ENCODE measurements at regions of chr16 and their contacts with region 1.

Region 1: DNA sequence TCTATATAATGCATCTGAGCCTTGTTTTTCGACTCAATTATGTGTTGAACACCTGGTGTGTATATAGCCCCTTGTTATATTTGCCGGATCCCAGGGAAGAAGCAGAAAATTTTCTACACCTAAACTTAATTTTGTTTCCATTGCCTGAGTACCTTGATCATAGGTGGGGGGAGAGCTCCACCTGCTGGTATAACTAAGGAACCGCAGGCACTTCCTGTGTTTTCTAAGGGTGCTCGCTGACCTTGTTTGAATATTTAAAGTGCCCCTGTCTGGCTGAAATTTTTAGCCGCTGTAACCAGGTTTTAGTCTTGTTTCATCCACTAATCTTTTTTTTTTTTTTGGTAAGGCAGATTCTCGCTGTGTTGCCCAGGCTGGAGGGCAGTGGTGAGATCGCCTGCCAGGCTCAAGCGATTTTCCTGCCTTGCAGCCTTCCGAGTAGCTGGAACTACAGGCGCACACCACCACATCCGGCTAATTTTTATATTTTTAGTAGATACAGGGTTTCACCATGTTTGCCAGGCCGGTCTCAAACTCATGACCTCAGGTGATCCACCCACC is 6.5 kb upstream of the NUBP1 start:
- DNase-seq: peak; percentile 59
- ATAC-seq: peak; percentile 64
- H3K4me3 Mint-ChIP-seq: no peak overlapping the region
- H3K27ac Mint-ChIP-seq: no peak overlapping the region
- H3K4me1 Mint-ChIP-seq: no peaks in the 10 kb centered on the region
- H3K27me3 Mint-ChIP-seq: no peaks in the 10 kb centered on the region
- CTCF ChIP-seq: peak; percentile 96

Region 2: DNA sequence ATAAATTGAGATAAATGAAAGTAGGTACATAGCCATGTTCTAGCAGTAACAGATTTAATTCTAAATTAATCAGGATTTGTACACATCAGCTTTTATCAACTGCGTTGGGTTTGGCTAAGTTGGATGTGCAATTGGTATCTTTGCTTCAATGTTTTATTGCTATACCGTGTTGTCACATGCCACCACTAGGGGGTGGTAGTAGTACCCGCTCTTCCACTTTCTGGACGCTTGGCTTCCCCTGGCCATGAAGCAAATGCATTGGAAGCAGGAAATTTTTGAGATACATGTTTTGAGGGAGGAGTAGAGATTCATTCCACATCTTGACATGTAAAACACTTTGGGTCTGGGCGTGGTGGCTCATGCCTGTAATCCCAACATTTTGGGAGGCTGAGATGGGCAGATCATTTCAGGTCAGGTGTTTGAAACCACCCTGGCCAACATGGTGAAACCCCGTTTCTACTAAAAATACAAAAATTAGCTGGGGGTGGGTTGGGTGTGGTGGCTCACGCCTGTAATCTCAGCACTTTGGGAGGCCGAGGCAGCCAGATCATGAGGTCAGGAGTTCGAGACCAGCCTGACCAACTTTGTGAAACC is 215.4 kb before region 1 on chr16:
- CTCF ChIA-PET with region 1: interaction called, 36 read pairs
- POLR2A ChIA-PET with region 1: interaction called, 3 read pairs
- DNase-seq: peak; percentile 52
- ATAC-seq: peak; percentile 59
- H3K4me3 Mint-ChIP-seq: no peak overlapping the region
- H3K27ac Mint-ChIP-seq: no peak overlapping the region
- H3K4me1 Mint-ChIP-seq: no peaks in the 10 kb centered on the region; the same call in 1 of the 2 replicates
- H3K27me3 Mint-ChIP-seq: no peaks in the 10 kb centered on the region; the same call in 1 of the 2 replicates
- CTCF ChIP-seq: peak; percentile 74

Region 3: DNA sequence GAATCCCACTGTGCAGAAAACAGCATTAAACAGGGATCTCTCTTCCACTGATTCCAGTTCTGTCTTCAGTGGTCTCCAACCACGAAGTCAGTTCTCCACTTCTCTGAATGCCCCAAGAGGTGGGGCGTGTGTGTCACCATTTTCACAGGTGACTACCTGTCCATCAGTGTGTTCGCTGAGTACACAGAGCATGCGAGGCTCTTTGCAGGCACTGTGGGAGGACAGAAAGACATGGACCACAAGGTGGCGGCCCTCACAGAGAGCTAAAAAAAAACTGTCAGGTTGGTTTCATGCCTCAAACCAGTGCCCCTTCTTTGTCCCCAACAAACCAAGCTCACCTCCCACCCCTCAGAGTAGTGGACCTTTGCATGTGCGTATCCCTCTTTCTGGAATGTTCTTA is 170.6 kb before region 1 on chr16:
- CTCF ChIA-PET with region 1: interaction called, 28 read pairs
- POLR2A ChIA-PET with region 1: no interaction called
- DNase-seq: no peak
- ATAC-seq: peak; percentile 55
- H3K4me3 Mint-ChIP-seq: no peak overlapping the region
- H3K27ac Mint-ChIP-seq: no peak overlapping the region
- H3K4me1 Mint-ChIP-seq: peaks cover 4% of the 10 kb centered on the region; the same call in 1 of the 2 replicates
- H3K27me3 Mint-ChIP-seq: no peaks in the 10 kb centered on the region; the same call in 1 of the 2 replicates
- CTCF ChIP-seq: no peak